T-cell (primary cell): ENCODE measurements at regions of chr4 and their contacts with region 1.

Region 1: GRCh38 chr4:88659055-88659889 is 38.4 kb downstream of the NAP1L5 start:
- DNase-seq: peak in 30 of 35 experiments; percentile 3 to 64 (median 22)
- ATAC-seq: peak; percentile 64 to 82 (median 73)
- H3K4me3 ChIP-seq: no peak overlapping the region
- H3K4me3 Mint-ChIP-seq: no peak overlapping the region
- H3K27ac ChIP-seq: no peak overlapping the region
- H3K27ac Mint-ChIP-seq: peak overlapping the region; percentile 4 to 46
- H3K4me1 ChIP-seq: no peaks in the 10 kb centered on the region
- H3K4me1 Mint-ChIP-seq: peaks cover 10 to 23% (median 14%) of the 10 kb centered on the region in 3 donors
- H3K27me3 ChIP-seq: no peaks in the 10 kb centered on the region
- H3K27me3 Mint-ChIP-seq: no peaks in the 10 kb centered on the region

Region 2: GRCh38 chr4:88533937-88534750 is 125.1 kb before region 1 on chr4:
- CTCF ChIA-PET with region 1: interaction called, 21 to 27 read pairs
- POLR2A ChIA-PET with region 1: no interaction called
- DNase-seq: no peak
- ATAC-seq: no peak
- H3K4me3 ChIP-seq: no peak overlapping the region
- H3K4me3 Mint-ChIP-seq: no peak overlapping the region
- H3K27ac ChIP-seq: no peak overlapping the region
- H3K27ac Mint-ChIP-seq: no peak overlapping the region
- H3K4me1 ChIP-seq: peaks cover 0 to 3% of the 10 kb centered on the region in 2 experiments
- H3K4me1 Mint-ChIP-seq: peaks cover 0 to under 1% (median under 1%) of the 10 kb centered on the region in 3 donors
- H3K27me3 ChIP-seq: no peaks in the 10 kb centered on the region
- H3K27me3 Mint-ChIP-seq: no peaks in the 10 kb centered on the region